CD4-positive, alpha-beta memory T cell (primary cell): ENCODE measurements at regions of chr3 and their contacts with region 1.

Region 1: DNA sequence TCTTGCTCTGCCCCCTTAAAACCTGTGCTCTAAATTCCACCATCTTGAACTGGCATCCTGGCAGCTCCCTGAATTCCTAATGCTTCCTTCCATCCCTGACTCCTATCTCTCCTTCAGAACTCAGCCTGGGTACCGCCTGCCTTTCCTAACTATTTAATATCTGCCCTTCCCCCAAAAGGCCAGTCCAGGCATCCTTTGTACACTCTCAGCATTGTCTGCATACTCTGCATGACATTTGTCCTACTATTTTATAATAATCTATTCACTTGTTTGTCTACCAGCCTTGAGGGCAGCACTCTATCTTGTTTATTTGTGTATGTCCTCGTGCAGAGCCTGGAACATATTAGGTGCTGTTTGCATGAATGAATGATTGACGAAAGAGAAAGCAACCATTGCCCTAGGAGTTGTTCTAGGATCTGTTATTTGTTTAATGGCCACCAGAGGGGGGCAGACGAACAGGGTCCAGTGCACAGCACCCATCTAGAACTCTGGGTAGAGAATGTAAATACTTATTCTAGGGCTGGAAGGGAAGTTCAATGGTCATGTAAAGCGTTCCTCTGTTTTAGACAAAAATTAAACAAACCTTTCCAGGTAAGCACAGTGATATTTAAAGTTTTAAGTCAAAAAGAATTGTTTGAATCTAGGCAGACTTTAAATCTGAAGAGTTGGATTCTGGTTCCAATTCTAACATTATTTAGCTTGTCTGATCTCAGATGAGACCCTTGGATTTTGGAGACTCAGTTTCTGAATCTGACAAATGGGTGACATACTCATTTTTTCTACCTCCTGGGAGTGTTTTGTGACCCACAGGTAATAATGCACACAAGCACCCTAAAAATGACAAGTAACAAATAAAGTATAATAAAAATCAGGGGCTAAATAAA is 125.8 kb upstream of the GALNT15 start:
- DNase-seq: peak in 4 of 5 donors; percentile 34 to 48 (median 41)
- H3K4me3 ChIP-seq: no peak overlapping the region
- H3K4me3 Mint-ChIP-seq: peak overlapping the region in 4 of 8 donors; percentile 41 to 75 (median 66)
- H3K27ac ChIP-seq: no peak overlapping the region
- H3K27ac Mint-ChIP-seq: no peak overlapping the region
- H3K4me1 ChIP-seq: no peaks in the 10 kb centered on the region
- H3K4me1 Mint-ChIP-seq: peaks cover 0 to 5% (median 2%) of the 10 kb centered on the region in 4 donors
- H3K27me3 ChIP-seq: no peaks in the 10 kb centered on the region
- H3K27me3 Mint-ChIP-seq: peaks cover 3% of the 10 kb centered on the region in 2 donors

Region 2: GRCh38 chr3:16060358-16060852 is 11.7 kb after region 1 on chr3:
- CTCF ChIA-PET with region 1: interaction called, 15 read pairs
- POLR2A ChIA-PET with region 1: no interaction called
- intact Hi-C with region 1: no loop called
- DNase-seq: no peak
- H3K4me3 ChIP-seq: no peak overlapping the region
- H3K4me3 Mint-ChIP-seq: no peak overlapping the region
- H3K27ac ChIP-seq: no peak overlapping the region
- H3K27ac Mint-ChIP-seq: no peak overlapping the region
- H3K4me1 ChIP-seq: no peaks in the 10 kb centered on the region
- H3K4me1 Mint-ChIP-seq: peaks cover 0 to 3% (median 0%) of the 10 kb centered on the region in 4 donors
- H3K27me3 ChIP-seq: no peaks in the 10 kb centered on the region
- H3K27me3 Mint-ChIP-seq: peaks cover 3 to 21% of the 10 kb centered on the region in 2 donors

Region 3: GRCh38 chr3:16177962-16178627 is 129.4 kb after region 1 on chr3:
- CTCF ChIA-PET with region 1: interaction called, 9 read pairs
- POLR2A ChIA-PET with region 1: no interaction called
- intact Hi-C with region 1: loop called (anchors 2 kb)
- DNase-seq: peak in 4 of 5 donors; percentile 35 to 51 (median 40)
- H3K4me3 ChIP-seq: no peak overlapping the region
- H3K4me3 Mint-ChIP-seq: peak overlapping the region in 1 of 8 donors; percentile 10
- H3K27ac ChIP-seq: no peak overlapping the region
- H3K27ac Mint-ChIP-seq: peak overlapping the region in 1 of 7 donors; percentile 38
- H3K4me1 ChIP-seq: no peaks in the 10 kb centered on the region
- H3K4me1 Mint-ChIP-seq: peaks cover 4 to 8% (median 6%) of the 10 kb centered on the region in 4 donors
- H3K27me3 ChIP-seq: no peaks in the 10 kb centered on the region
- H3K27me3 Mint-ChIP-seq: peaks cover 12 to 16% of the 10 kb centered on the region in 2 donors

Region 4: DNA sequence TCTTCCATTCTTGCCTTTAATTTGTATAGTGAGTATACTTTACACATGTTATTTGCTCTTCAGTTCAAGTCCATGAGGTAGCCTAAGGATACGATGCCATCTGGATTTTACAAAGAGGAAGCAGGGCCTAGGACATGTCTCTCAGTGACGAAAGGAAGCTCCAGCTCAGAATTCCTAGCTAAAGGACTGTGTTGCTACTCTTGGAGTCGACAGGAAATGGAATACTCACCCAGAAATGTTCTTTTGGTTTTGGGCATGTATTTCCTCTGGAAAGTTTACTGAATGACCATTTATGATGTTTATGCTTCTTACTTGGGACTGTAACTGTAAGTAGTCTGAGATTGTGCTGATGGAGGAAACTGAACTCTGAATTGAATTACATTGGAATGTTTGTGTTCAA is 228.8 kb after region 1 on chr3:
- CTCF ChIA-PET with region 1: no interaction called
- POLR2A ChIA-PET with region 1: no interaction called
- intact Hi-C with region 1: no loop called
- DNase-seq: no peak
- H3K4me3 ChIP-seq: no peak overlapping the region
- H3K4me3 Mint-ChIP-seq: no peak overlapping the region
- H3K27ac ChIP-seq: no peak overlapping the region
- H3K27ac Mint-ChIP-seq: peak overlapping the region in 2 of 7 donors; percentile 1 to 40
- H3K4me1 ChIP-seq: no peaks in the 10 kb centered on the region
- H3K4me1 Mint-ChIP-seq: peaks cover 0 to 6% (median 2%) of the 10 kb centered on the region in 4 donors
- H3K27me3 ChIP-seq: no peaks in the 10 kb centered on the region
- H3K27me3 Mint-ChIP-seq: no peaks in the 10 kb centered on the region